Activated T-helper 1 cell treated with anti-CD3 and anti-CD28 coated beads, Interleukin-12 subunit alpha, Interleukin-12 subunit beta, Interleukin-2, Interleukin-4 antibody, amounts not matched to agents 30 ng/mL and 10 ng/mL and 1 ng/mL, durations not matched to agents 14 hours and 24 hours and 36 hours (primary cell): ENCODE measurements at regions of chr3 and their contacts with region 1.

Region 1: GRCh38 chr3:108589146-108589997 is at the starts of genes CIP2A and DZIP3:
- DNase-seq: peak; percentile 80
- H3K4me3 Mint-ChIP-seq: peak within 1 kb of the TSS; percentile 94
- H3K27ac Mint-ChIP-seq: peak within 1 kb of the TSS; percentile 95
- H3K4me1 Mint-ChIP-seq: peaks cover 65% of the 10 kb centered on the region
- H3K27me3 Mint-ChIP-seq: no peaks in the 10 kb centered on the region
- total RNA-seq, gene CIP2A: 49.7 and 54.0 TPM in 2 replicates
- total RNA-seq, gene DZIP3: 5.0 and 5.2 TPM in 2 replicates

Region 2: GRCh38 chr3:107938143-107938542 is 651.2 kb before region 1 on chr3:
- intact Hi-C with region 1: loop called (anchors 5 kb)
- DNase-seq: no peak
- H3K4me3 Mint-ChIP-seq: no peak overlapping the region
- H3K27ac Mint-ChIP-seq: no peak overlapping the region
- H3K4me1 Mint-ChIP-seq: peaks cover 17% of the 10 kb centered on the region
- H3K27me3 Mint-ChIP-seq: peaks cover 5% of the 10 kb centered on the region

Region 3: GRCh38 chr3:108221911-108222852 is 367.2 kb before region 1 on chr3 and contains the start of gene IFT57:
- intact Hi-C with region 1: loop called (anchors 5 kb)
- DNase-seq: peak; percentile 94
- H3K4me3 Mint-ChIP-seq: peak within 1 kb of the TSS; percentile 87
- H3K27ac Mint-ChIP-seq: peak within 1 kb of the TSS; percentile 93
- H3K4me1 Mint-ChIP-seq: peaks cover 51% of the 10 kb centered on the region
- H3K27me3 Mint-ChIP-seq: no peaks in the 10 kb centered on the region
- total RNA-seq, gene IFT57: 27.0 and 34.9 TPM in 2 replicates

Region 4: DNA sequence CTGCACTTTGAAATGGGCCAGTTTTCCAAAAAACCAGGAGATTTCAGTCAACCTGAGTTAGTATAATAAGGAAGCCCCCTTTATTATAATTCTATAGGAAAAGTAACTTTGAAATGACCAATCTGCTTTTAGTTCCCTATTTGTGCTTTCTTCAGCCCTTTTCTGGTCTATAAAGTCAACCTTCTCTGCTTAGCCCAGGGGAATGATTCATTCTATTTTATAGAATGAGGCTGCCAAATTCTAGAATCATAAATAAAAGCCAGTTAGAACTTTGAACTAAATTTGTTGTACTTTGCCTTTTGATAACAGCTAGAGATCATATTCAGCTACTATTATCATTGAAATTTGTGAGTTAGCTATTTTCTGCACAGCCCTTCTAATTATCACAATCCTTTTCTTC is 24.8 kb before region 1 on chr3:
- intact Hi-C with region 1: loop called (anchors 2 kb)
- DNase-seq: no peak
- H3K4me3 Mint-ChIP-seq: no peak overlapping the region
- H3K27ac Mint-ChIP-seq: peak overlapping the region; percentile 9
- H3K4me1 Mint-ChIP-seq: peaks cover 20% of the 10 kb centered on the region
- H3K27me3 Mint-ChIP-seq: no peaks in the 10 kb centered on the region

Region 5: DNA sequence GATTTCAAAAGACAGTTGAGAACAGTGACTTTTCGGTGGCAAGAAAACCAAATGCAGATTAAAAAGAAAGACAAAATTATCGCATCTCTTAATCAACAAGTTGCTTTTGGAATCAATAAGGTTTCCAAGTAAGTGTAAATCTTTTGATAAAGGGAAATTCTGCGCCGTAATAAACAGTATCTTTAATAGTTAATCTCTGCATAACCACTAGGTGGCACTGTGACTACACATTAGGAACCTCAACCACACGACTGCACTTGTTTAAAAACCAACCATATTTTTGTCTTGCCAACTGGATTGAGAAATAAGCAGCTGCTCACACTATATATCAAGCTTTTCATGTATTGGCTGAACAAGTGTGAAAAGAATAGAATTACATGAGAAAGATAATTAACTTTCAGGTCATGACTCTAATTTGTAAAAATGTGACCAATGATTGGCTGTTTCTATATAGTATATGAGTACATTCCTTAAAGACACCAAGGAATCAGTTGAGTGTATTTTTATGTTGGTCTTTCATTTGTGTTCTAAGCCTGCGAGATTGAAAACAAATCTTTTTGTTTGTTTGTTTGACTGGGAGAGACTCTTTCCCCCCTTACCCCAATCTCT is 72.9 kb after region 1 on chr3:
- intact Hi-C with region 1: loop called (anchors 5 kb)
- DNase-seq: peak; percentile 17
- H3K4me3 Mint-ChIP-seq: no peak overlapping the region
- H3K27ac Mint-ChIP-seq: no peak overlapping the region
- H3K4me1 Mint-ChIP-seq: peaks cover 17% of the 10 kb centered on the region
- H3K27me3 Mint-ChIP-seq: no peaks in the 10 kb centered on the region

Region 6: GRCh38 chr3:108897883-108898282 is 308.5 kb after region 1 on chr3:
- intact Hi-C with region 1: loop called (anchors 5 kb)
- DNase-seq: no peak
- H3K4me3 Mint-ChIP-seq: no peak overlapping the region
- H3K27ac Mint-ChIP-seq: peak overlapping the region; percentile 37
- H3K4me1 Mint-ChIP-seq: peaks cover 18% of the 10 kb centered on the region
- H3K27me3 Mint-ChIP-seq: no peaks in the 10 kb centered on the region